H1 (cell line): ENCODE measurements at regions of chr1 and their contacts with region 1.

Region 1: DNA sequence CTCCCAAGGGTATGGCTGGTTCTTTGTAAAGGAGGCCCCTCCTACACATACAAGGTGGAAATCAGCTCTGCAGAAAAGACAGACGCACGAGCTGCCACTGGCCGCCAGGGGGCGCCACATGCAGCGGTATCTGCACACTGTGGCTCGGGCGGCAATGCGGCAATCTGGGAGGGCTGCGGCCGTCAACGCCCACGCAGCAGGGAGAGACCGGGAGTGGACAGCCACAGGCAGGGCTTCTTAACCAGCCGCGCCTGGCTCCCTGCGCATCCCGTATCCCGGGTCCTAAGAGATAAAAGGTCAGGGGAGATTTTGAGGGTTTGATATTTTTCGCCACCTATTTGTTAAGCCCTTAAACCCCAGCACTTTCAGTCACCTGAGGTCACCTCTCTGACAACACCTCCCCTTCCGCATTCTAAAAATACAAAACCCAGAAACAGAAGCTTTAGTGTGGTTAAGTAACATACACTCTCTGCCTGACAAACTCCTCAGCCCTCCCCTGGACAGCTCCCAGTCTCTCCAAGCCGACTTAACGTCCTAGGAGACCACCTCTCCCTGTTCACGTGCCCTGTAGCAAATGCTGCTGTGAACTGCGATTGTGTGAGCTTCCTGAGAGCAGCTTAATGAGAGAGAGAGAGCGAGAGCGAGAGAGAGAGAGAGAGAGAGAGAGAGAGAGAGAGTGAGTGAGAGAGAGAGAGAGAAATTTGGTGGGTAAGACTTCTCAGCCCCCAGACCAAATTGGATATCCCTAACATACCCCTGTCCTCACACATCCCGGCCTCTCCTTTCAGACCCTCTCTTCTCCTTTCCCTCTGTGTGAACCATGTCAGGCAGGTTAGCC is 13.5 kb upstream of the KCNA2 start:
- DNase-seq: peak; percentile 53 to 94
- H3K4me3 ChIP-seq: peak overlapping the region; percentile 13 to 56 (median 48); a peak in 7 of 8 replicates
- H3K27ac ChIP-seq: no peak overlapping the region
- H3K4me1 ChIP-seq: peaks cover 0 to 2% (median 0%) of the 10 kb centered on the region in 4 experiments; a peak in 4 of 7 replicates
- H3K27me3 ChIP-seq: peaks cover 0 to 18% (median 10%) of the 10 kb centered on the region in 4 experiments; a peak in 4 of 7 replicates
- CTCF ChIP-seq: peak; percentile 94 to 99 (median 97)
- EP300 ChIP-seq: no peak
- POLR2A ChIP-seq: no peak
- RAD21 ChIP-seq: peak; percentile 79 to 84

Region 2: GRCh38 chr1:110524311-110525251 is 95.0 kb before region 1 on chr1:
- CTCF ChIA-PET with region 1: interaction called, 189 read pairs
- POLR2A ChIA-PET with region 1: no interaction called
- DNase-seq: peak; percentile 53 to 81
- H3K4me3 ChIP-seq: no peak overlapping the region
- H3K27ac ChIP-seq: no peak overlapping the region
- H3K4me1 ChIP-seq: peaks cover 0 to 3% (median 0%) of the 10 kb centered on the region in 4 experiments; a peak in 1 of 7 replicates
- H3K27me3 ChIP-seq: peaks cover 0 to 6% (median 0%) of the 10 kb centered on the region in 4 experiments; a peak in 4 of 7 replicates
- CTCF ChIP-seq: peak; percentile 89 to 97 (median 93)
- EP300 ChIP-seq: no peak
- POLR2A ChIP-seq: no peak
- RAD21 ChIP-seq: peak; percentile 95 to 98

Region 3: GRCh38 chr1:110548381-110548780 is 71.2 kb before region 1 on chr1:
- CTCF ChIA-PET with region 1: interaction called, 10 read pairs
- POLR2A ChIA-PET with region 1: no interaction called
- DNase-seq: peak in 1 of 2 experiments; percentile 52
- H3K4me3 ChIP-seq: no peak overlapping the region
- H3K27ac ChIP-seq: no peak overlapping the region
- H3K4me1 ChIP-seq: no peaks in the 10 kb centered on the region
- H3K27me3 ChIP-seq: peaks cover 0 to 2% (median 2%) of the 10 kb centered on the region in 4 experiments; a peak in 2 of 7 replicates
- CTCF ChIP-seq: peak; percentile 47 to 66 (median 60)
- EP300 ChIP-seq: no peak
- POLR2A ChIP-seq: no peak
- RAD21 ChIP-seq: peak; percentile 48 to 52

Region 4: GRCh38 chr1:110605901-110606656 is 13.6 kb before region 1 on chr1 and contains the start of gene KCNA2:
- CTCF ChIA-PET with region 1: interaction called, 23 read pairs
- POLR2A ChIA-PET with region 1: no interaction called
- DNase-seq: peak; percentile 50 to 77
- H3K4me3 ChIP-seq: peak within 1 kb of the TSS; percentile 54 to 69 (median 64)
- H3K27ac ChIP-seq: no peak within 1 kb of the TSS
- H3K4me1 ChIP-seq: peaks cover 5 to 15% (median 10%) of the 10 kb centered on the region in 4 experiments
- H3K27me3 ChIP-seq: peaks cover 36 to 78% (median 69%) of the 10 kb centered on the region in 4 experiments
- CTCF ChIP-seq: no peak
- EP300 ChIP-seq: no peak
- POLR2A ChIP-seq: no peak
- RAD21 ChIP-seq: no peak
- total RNA-seq, gene KCNA2: 0.75 and 0.78 TPM in 2 replicates

Region 5: DNA sequence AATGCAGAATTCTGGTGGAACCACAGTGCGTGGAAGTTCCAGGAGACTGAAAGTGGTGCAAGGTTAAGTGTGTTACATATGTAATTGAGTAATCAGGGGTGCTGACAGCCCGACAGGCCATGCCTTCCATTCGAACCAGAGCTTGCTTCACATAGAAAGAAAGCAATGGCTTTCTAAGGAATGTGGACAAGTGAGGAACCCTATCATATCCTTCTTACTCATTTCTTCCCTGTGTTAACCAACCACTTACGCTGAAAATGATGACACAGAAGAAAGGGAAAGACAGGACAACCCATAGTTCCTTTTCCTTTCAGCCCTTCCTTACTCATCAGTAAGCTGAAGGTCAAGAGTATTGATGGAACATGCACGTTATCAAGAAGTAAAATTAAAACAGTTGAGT is 103.2 kb after region 1 on chr1:
- CTCF ChIA-PET with region 1: no interaction called
- POLR2A ChIA-PET with region 1: no interaction called
- DNase-seq: no peak
- H3K4me3 ChIP-seq: no peak overlapping the region
- H3K27ac ChIP-seq: no peak overlapping the region
- H3K4me1 ChIP-seq: no peaks in the 10 kb centered on the region; a peak in 1 of 7 replicates
- H3K27me3 ChIP-seq: 0 out of 7 replicates have a peak, but pooled peaks cover 0 to 3% (median 0%) of the 10 kb centered on the region in 4 experiments
- CTCF ChIP-seq: no peak
- EP300 ChIP-seq: no peak
- POLR2A ChIP-seq: no peak
- RAD21 ChIP-seq: no peak

Region 6: DNA sequence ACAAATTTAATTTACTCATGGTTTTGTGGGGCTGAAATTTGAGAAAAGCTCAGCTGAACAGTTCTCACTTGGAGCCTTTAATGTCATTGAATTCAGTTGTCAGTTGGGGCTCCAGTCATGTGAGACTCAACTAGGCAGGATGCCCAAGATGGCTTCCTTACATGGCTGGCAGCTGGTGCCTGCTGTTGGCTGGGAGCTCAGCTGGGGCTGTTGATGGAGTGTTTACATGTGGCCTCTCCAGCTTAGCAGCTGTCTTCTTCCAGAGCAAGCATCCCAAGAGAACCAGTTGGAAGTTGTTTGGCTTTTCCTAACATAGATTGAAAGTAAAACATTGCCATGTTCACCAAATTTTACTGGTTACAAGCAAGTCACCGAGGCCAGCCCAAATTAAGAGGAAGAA is 136.9 kb after region 1 on chr1:
- CTCF ChIA-PET with region 1: interaction called, 10 read pairs
- POLR2A ChIA-PET with region 1: no interaction called
- DNase-seq: no peak
- H3K4me3 ChIP-seq: no peak overlapping the region
- H3K27ac ChIP-seq: no peak overlapping the region
- H3K4me1 ChIP-seq: peaks cover 0 to 19% (median 6%) of the 10 kb centered on the region in 4 experiments; a peak in 5 of 7 replicates
- H3K27me3 ChIP-seq: no peaks in the 10 kb centered on the region
- CTCF ChIP-seq: no peak
- EP300 ChIP-seq: no peak
- POLR2A ChIP-seq: no peak
- RAD21 ChIP-seq: no peak

Region 7: DNA sequence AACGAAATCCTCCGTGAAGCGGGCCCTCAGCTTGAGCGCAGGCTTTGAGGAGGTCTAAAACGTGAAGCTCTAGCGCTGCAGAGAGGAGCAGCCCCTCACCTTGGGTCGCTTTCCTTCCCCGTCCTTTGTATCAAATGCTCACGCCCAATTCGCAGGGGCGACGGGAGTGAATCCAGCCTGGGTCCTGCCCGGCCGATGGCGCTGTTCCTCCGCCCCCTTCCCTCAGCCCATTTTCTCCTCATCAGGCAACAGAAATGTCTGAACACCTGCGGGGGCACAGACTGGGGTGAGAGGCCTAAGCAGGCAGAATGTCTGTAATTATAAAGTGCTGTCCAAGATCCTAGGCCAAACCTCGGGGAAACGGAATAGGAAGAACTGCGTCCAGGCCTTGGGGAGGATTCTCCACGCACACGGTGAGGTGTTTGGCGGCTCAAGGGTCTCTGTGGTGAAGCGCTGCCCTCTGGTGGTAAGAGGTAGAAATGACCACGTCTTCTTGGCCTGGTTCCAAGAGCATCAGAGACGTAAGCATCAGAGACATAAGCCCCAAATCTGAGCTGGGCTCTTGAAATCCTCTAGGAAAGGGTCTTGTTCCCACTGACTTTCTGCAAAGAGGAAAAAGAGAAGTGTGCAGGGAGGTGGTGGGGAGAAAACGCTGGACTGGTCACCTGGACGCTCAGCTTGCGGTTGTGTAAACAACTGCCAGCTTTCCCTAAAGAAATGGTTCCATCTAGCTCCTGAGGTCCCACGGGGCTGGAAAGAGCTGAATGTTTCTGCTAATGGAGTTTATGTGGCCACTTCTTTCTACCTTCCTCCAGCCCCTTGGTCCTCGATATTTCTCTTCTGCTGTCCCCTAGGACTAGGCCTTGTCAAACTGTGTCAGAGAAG is 161.2 kb after region 1 on chr1:
- CTCF ChIA-PET with region 1: interaction called, 166 read pairs
- POLR2A ChIA-PET with region 1: no interaction called
- DNase-seq: peak; percentile 43 to 83
- H3K4me3 ChIP-seq: peak overlapping the region; percentile 11 to 61 (median 32); a peak in 7 of 8 replicates
- H3K27ac ChIP-seq: no peak overlapping the region
- H3K4me1 ChIP-seq: peaks cover 0 to 2% (median 0%) of the 10 kb centered on the region in 4 experiments; a peak in 1 of 7 replicates
- H3K27me3 ChIP-seq: peaks cover 0 to 5% (median 1%) of the 10 kb centered on the region in 4 experiments; a peak in 4 of 7 replicates
- CTCF ChIP-seq: peak; percentile 81 to 91 (median 88)
- EP300 ChIP-seq: no peak
- POLR2A ChIP-seq: no peak
- RAD21 ChIP-seq: peak; percentile 90 to 92